Thyroid gland (tissue), 4 donors: ENCODE measurements at regions of chr6 and their contacts with region 1.

Region 1: DNA sequence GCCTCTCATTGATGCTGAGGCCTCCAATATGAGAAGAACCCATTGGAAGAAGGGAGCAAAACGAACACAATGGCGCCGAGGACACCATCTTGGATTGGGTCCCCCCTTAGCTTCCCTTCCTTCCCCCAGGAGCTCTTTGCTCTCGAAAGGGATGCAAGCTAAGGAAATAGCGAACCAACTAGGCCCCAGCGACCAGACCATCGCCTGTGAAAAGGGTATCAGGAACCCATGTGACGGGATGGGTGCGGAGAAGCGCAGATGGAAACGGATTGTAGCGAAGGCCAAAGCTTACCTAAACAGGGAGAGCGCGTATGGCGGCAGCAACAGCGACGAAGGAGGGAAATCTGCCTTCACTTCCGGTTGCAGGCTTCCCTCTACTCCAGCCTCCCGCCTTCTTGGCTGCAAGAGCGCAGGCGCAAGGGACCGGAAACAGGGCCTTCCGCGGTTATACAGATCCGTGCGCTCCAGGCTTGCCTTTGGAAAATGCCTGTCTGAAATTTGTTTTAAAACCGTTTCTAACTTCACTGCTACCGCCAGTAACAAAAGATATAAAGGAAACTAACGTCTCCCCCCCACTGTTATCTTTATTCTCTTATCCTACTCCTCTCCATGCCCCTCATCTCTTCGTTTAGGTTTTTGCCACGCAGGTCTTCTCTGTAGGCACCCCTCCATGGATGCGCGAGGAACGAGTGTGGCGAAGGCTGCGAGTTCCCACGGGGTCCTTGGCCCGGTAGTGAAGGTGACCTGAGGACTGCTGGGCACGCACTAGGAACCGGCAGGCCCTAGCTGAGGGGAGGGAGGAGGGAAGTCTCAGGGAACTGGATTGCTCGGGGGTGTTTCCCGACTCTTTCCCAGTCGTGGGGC is at the start of gene DDX39B:
- DNase-seq: peak; percentile 96 to 97
- H3K4me3 ChIP-seq: peak within 1 kb of the TSS; percentile 28 to 77 (median 75)
- H3K27ac ChIP-seq: peak within 1 kb of the TSS; percentile 92 to 99 (median 97)
- H3K4me1 ChIP-seq: peaks cover 24 to 25% of the 10 kb centered on the region in 2 donors
- H3K27me3 ChIP-seq: no peaks in the 10 kb centered on the region
- CTCF ChIP-seq: no peak
- POLR2A ChIP-seq: peak; percentile 72 to 76
- total RNA-seq, gene DDX39B: 296 to 339 (median 314) TPM

Region 2: DNA sequence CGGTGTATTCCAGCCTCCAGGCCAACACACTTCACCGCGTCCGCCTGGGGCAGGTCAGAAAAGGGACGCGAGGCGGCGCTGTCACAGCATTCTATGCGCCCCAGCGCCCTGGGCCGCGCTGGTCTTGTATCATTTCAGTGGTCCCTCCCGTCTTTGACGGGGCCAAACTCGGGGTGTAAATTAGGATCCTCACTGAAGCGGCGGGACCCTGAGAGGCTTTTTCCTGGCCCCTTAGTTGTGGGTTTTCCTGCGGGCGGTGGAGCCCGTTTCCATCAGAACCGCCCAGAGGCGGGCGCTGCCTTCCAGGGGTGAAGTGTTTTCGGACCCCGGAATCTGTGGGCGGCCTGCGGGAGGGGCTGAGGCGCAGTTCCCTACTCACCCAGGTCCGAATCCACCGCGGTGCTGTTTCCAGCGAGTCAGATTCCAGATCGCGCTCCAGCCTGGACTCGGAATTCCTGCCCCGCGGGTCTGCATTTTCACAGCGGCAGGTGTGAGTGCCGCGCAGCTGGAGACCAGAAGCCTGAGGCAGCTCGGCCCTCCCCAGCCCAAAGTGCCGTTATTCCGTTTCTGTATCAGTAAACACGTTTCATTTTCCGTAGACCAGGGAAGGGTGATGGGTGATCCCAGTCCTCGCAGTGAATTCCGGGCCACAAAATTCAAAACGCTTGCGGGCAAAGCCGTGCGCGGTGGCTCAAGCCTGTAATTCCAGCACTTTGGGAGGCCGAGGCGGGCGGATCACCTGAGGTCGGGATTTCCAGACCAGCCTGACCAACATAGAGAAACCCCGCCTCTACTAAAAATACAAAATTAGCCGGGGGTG is 47.8 kb before region 1 on chr6:
- intact Hi-C with region 1: loop called (anchors 10 kb)
- DNase-seq: peak; percentile 78 to 79
- H3K4me3 ChIP-seq: peak overlapping the region in 2 of 3 donors; percentile 35 to 49
- H3K27ac ChIP-seq: peak overlapping the region in 2 of 3 donors; percentile 57 to 73
- H3K4me1 ChIP-seq: peaks cover 0 to 7% of the 10 kb centered on the region in 2 donors
- H3K27me3 ChIP-seq: no peaks in the 10 kb centered on the region
- CTCF ChIP-seq: peak; percentile 36 to 78 (median 66)
- POLR2A ChIP-seq: no peak